Ascending aorta (tissue), 2 donors: ENCODE measurements at regions of chr1 and their contacts with region 1.

Region 1: GRCh38 chr1:114670083-114671010 is 498 bp upstream of the DENND2C start:
- DNase-seq: peak; percentile 74 to 96
- H3K4me3 ChIP-seq: peak overlapping the region; percentile 77 to 94
- H3K27ac ChIP-seq: peak overlapping the region; percentile 54 to 82
- H3K4me1 ChIP-seq: no peaks in the 10 kb centered on the region
- H3K27me3 ChIP-seq: no peaks in the 10 kb centered on the region
- CTCF ChIP-seq: peak in 2 of 3 experiments; percentile 20 to 37

Region 2: GRCh38 chr1:113389953-113390834 is 1280.2 kb before region 1 on chr1 and contains the start of gene MAGI3:
- intact Hi-C with region 1: loop called (anchors 5 kb)
- DNase-seq: peak; percentile 87 to 98
- H3K4me3 ChIP-seq: peak within 1 kb of the TSS; percentile 96 to 99
- H3K27ac ChIP-seq: peak within 1 kb of the TSS; percentile 89 to 91
- H3K4me1 ChIP-seq: peaks cover 5 to 6% of the 10 kb centered on the region in 2 donors
- H3K27me3 ChIP-seq: no peaks in the 10 kb centered on the region
- CTCF ChIP-seq: no peak
- total RNA-seq, gene MAGI3: 14.9 TPM

Region 3: GRCh38 chr1:114346480-114347029 is 323.8 kb before region 1 on chr1:
- intact Hi-C with region 1: loop called (anchors 5 kb)
- DNase-seq: peak; percentile 74 to 98
- H3K4me3 ChIP-seq: peak overlapping the region; percentile 69 to 78
- H3K27ac ChIP-seq: peak overlapping the region; percentile 88 to 94
- H3K4me1 ChIP-seq: peaks cover 6 to 8% of the 10 kb centered on the region in 2 donors
- H3K27me3 ChIP-seq: no peaks in the 10 kb centered on the region
- CTCF ChIP-seq: peak; percentile 100

Region 4: DNA sequence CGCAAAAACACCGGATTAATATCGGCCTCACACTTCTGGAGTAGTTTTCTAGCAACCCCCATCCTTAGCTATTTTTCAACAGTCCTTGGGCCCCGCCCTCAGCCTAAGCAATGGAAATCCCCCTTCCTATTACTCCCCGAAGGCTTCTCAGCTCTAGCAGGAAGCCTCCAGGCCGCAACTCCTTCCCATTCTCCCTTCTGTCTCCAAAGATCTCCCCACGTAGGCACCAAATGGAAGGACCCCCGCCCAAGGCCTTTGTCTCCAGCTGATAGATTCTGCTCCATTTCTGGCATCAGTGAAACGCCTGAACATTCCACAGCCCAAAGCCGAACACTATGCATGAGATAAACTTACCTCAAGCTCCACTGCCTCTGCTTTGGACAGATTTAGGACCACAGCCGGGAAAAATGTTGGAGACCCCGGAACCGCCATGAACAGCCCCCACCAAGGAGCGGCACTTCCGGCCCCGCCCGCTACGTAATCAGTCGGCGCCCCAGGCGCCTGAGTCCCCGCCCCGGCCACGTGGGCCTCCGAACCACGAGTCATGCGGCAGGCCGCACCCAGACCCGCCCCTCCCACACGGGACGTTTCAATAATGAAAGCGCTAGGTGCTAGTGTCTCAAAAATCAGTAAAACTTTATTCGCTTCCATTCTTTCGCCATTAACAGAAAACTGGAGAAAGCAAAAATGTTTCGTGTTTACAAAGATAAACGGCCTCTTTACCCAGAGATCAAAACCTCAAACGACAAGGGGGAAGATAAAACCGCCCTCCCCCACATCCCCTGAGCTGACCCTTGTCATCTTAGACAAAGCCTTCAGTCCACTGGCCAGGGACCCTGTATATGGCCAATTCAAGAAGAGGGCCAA is 46.2 kb after region 1 on chr1 and contains the start of gene NRAS:
- intact Hi-C with region 1: loop called (anchors 1 kb)
- DNase-seq: peak; percentile 71 to 97
- H3K4me3 ChIP-seq: peak within 1 kb of the TSS; percentile 86 to 99
- H3K27ac ChIP-seq: peak within 1 kb of the TSS; percentile 87 to 95
- H3K4me1 ChIP-seq: peaks cover 3 to 12% of the 10 kb centered on the region in 2 donors
- H3K27me3 ChIP-seq: no peaks in the 10 kb centered on the region
- CTCF ChIP-seq: no peak
- total RNA-seq, gene NRAS: 10.7 TPM

Region 5: DNA sequence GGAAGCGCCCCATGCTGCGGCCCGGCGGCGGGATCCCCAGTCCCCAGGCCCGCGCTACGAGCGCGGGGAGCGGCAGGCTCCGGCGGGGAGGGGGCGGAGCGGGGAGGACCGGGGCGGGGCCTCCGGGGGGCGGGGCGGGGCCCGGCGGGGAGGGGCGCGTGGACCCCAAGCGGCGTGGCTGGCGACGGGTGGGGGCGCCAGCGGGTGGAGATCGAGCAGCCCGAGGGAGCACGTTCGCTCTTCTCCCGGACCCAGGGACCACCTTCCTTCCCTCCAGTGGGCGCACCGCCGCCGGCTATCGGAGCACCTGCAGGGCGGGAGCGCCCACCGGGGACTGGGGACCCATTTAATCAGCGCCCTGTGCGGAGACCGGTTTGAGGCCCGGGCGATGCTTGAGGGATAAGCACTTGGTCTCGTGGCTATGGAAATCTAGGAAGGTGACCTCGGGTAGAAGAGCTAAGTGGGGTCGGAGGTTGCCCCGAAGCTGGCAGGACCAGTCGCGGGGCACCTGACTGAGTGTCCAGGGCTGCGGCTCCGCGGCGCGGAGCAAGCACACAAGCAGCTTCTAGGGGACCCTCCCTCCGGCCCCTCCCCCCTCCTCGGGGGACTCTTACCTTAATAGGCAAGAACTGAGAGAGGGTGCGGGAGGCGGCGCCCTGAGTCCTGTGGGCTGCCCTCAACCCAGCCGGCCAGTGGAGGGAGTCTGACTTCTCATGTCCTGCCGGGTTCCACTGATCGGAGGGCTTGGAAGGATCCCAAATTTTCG is 419.3 kb after region 1 on chr1 and contains the start of gene TSPAN2:
- intact Hi-C with region 1: loop called (anchors 10 kb)
- DNase-seq: peak; percentile 79 to 95
- H3K4me3 ChIP-seq: peak within 1 kb of the TSS; percentile 84 to 90
- H3K27ac ChIP-seq: peak within 1 kb of the TSS; percentile 95 to 99
- H3K4me1 ChIP-seq: peaks cover 4 to 27% of the 10 kb centered on the region in 2 donors
- H3K27me3 ChIP-seq: no peaks in the 10 kb centered on the region
- CTCF ChIP-seq: peak; percentile 2 to 61 (median 53)
- total RNA-seq, gene TSPAN2: 10.9 TPM